ENCODE measurements at regions of chr5 and their contacts with region 1.

Region 1: DNA sequence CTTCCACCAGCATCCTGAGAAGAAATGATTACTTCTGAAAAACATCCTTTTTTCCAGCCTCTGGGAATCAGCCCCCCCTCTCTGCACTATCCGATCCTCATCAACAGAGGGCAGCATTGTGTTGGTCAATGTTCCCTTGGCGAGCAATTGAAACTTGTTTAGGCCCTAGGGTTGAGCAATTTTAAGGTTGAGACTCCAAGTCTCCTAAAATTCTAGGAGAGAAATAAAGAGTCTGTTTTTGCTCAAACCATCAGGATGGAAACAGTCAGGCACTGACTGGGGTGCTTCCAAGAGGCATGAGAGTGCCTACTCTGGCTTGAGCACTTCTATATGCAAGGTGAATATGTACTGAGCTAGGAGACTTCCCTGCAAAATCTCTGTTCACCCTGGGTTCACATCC is 12.4 kb upstream of the CYFIP2 start:
- DNase-seq: no peak
- ATAC-seq: no peak
- H3K4me3 Mint-ChIP-seq: peak overlapping the region; percentile 28
- H3K27ac Mint-ChIP-seq: peak overlapping the region; percentile 95
- H3K4me1 Mint-ChIP-seq: peaks cover 94% of the 10 kb centered on the region
- H3K27me3 Mint-ChIP-seq: no peaks in the 10 kb centered on the region
- CTCF ChIP-seq: peak; percentile 81

Region 2: DNA sequence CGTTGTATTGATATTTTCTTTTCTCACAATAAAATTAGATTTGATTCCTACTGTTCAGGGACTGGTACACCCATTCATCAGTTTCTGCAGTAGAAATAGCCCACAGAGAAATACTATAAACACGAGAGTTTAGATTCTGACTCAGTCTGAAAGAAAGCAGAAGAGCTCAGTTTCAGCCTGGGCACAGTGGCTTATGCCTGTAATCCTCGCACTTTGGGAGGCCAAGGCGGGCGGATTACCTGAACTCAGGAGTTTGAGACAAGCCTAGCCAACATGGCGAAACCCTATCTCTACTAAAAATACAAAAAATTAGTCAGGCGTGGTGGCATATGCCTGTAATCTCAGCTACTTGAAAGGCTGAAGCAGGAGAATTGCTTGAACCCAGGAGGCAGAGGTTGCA is 64.3 kb before region 1 on chr5:
- CTCF ChIA-PET with region 1: interaction called, 4 read pairs
- POLR2A ChIA-PET with region 1: interaction called, 10 read pairs
- intact Hi-C with region 1: no loop called
- DNase-seq: peak; percentile 68
- ATAC-seq: peak; percentile 50
- H3K4me3 Mint-ChIP-seq: peak overlapping the region; percentile 99
- H3K27ac Mint-ChIP-seq: peak overlapping the region; percentile 94
- H3K4me1 Mint-ChIP-seq: peaks cover 56% of the 10 kb centered on the region
- H3K27me3 Mint-ChIP-seq: no peaks in the 10 kb centered on the region
- CTCF ChIP-seq: no peak

Region 3: DNA sequence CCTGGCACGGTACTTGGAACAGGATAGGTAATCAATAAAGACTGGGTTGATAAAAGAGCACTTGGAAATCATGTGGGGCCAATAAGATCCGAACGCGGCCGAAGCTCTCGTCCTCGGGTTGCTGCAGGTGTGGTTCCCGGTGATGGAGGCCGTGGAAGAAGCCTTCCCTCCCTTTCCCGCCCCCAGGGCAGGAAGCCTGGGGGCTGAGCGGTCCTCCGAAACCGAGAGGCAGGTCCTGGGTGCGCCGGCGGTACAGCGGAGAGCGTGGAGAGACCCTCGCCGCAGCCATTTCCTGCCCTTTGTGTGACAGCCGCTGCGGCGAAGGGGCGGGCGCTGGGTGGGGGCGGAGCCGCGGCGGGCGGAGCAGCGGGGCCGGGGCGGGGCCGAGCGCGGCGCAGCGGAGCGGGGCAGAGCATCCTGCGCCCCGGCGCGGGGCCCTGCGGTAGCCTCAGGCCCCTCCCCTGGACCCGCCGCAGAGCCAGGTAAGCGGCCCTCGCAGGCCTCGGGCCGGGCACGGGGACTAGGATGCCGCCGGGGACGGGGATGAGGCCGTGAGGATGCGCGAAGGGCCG is 12.3 kb after region 1 on chr5 and contains the start of gene CYFIP2:
- CTCF ChIA-PET with region 1: interaction called, 38 read pairs
- POLR2A ChIA-PET with region 1: interaction called, 98 read pairs
- intact Hi-C with region 1: no loop called
- DNase-seq: peak; percentile 90
- ATAC-seq: peak; percentile 80
- H3K4me3 Mint-ChIP-seq: peak within 1 kb of the TSS; percentile 91
- H3K27ac Mint-ChIP-seq: peak within 1 kb of the TSS; percentile 97
- H3K4me1 Mint-ChIP-seq: peaks cover 65% of the 10 kb centered on the region
- H3K27me3 Mint-ChIP-seq: no peaks in the 10 kb centered on the region
- CTCF ChIP-seq: no peak
- total RNA-seq, gene CYFIP2: 350 to 351 TPM

Region 4: DNA sequence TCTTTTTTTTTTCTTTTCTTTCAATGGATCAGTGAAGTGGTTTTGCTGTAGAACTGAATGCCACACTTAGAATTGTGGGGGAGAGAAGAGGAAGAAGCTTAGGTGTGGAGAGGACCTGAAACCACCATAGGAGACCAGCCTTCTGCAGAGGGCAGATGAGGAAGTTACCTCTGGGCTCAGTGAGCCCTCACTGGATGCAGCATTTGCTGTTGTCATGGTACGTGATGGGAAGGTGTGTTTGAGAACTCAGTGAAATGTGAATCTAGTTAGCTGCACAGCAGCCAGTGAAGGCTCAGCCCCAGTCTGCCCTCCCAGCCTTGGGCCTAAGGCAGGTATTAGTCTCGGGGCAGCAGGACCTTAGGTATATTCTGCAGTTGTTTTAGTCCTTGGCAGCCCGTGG is 29.9 kb after region 1 on chr5:
- CTCF ChIA-PET with region 1: interaction called, 13 read pairs
- POLR2A ChIA-PET with region 1: interaction called, 4 read pairs
- intact Hi-C with region 1: no loop called
- DNase-seq: peak; percentile 36
- ATAC-seq: peak; percentile 76
- H3K4me3 Mint-ChIP-seq: peak overlapping the region; percentile 1
- H3K27ac Mint-ChIP-seq: peak overlapping the region; percentile 79
- H3K4me1 Mint-ChIP-seq: peaks cover 88% of the 10 kb centered on the region
- H3K27me3 Mint-ChIP-seq: no peaks in the 10 kb centered on the region
- CTCF ChIP-seq: no peak

Region 5: GRCh38 chr5:157303667-157304327 is 50.2 kb after region 1 on chr5:
- CTCF ChIA-PET with region 1: interaction called, 18 read pairs
- POLR2A ChIA-PET with region 1: interaction called, 4 read pairs
- intact Hi-C with region 1: no loop called
- DNase-seq: peak; percentile 60
- ATAC-seq: peak; percentile 53
- H3K4me3 Mint-ChIP-seq: no peak overlapping the region
- H3K27ac Mint-ChIP-seq: peak overlapping the region; percentile 66
- H3K4me1 Mint-ChIP-seq: peaks cover 66% of the 10 kb centered on the region
- H3K27me3 Mint-ChIP-seq: no peaks in the 10 kb centered on the region
- CTCF ChIP-seq: peak; percentile 35

Region 6: GRCh38 chr5:157312492-157312891 is 58.9 kb after region 1 on chr5:
- CTCF ChIA-PET with region 1: interaction called, 20 read pairs
- POLR2A ChIA-PET with region 1: interaction called, 4 read pairs
- intact Hi-C with region 1: no loop called
- DNase-seq: peak; percentile 77
- ATAC-seq: peak; percentile 94
- H3K4me3 Mint-ChIP-seq: no peak overlapping the region
- H3K27ac Mint-ChIP-seq: peak overlapping the region; percentile 91
- H3K4me1 Mint-ChIP-seq: peaks cover 41% of the 10 kb centered on the region
- H3K27me3 Mint-ChIP-seq: no peaks in the 10 kb centered on the region
- CTCF ChIP-seq: peak; percentile 78

Measured in activated CD8-positive, alpha-beta T cell treated with anti-CD3 and anti-CD28 coated beads for 36 hours (primary cell).